ENCODE measurements at regions of chr12 and their contacts with region 1.

Region 1: GRCh38 chr12:80936498-80937390 is 990 bp downstream of the LIN7A start:
- DNase-seq: no peak
- H3K4me3 Mint-ChIP-seq: peak overlapping the region; percentile 51
- H3K27ac Mint-ChIP-seq: no peak overlapping the region
- H3K4me1 Mint-ChIP-seq: no peaks in the 10 kb centered on the region
- H3K27me3 Mint-ChIP-seq: peaks cover 35% of the 10 kb centered on the region

Region 2: GRCh38 chr12:80709811-80710726 is 226.7 kb before region 1 on chr12:
- intact Hi-C with region 1: loop called (anchors 5 kb)
- DNase-seq: no peak
- H3K4me3 Mint-ChIP-seq: no peak overlapping the region
- H3K27ac Mint-ChIP-seq: no peak overlapping the region
- H3K4me1 Mint-ChIP-seq: no peaks in the 10 kb centered on the region
- H3K27me3 Mint-ChIP-seq: peaks cover 64% of the 10 kb centered on the region

Region 3: DNA sequence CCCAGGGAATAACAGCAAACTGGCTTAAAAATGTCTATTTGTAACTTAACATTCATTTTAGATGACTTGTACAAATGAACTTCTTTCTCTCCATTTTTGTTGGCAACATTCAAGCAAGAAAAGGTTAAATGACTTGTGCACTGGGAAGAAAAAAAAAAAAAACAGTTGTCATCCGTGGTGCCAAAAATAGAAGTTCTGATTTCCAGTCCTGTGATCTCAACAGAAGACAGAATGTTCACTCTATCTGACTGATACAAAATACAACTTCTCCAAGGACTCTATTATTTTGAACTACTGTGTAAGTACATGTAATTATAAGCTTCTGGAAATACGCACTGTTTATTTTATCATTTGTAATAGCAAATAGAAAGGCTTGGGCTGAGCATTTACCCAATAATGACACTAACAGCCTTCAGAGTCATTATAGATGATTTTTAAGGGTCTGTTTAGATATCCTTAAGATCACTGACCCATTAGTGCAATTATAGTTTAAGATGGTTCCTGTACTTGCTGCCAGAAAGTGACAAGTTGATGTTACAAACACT is 59.0 kb before region 1 on chr12:
- intact Hi-C with region 1: no loop called
- DNase-seq: no peak
- H3K4me3 Mint-ChIP-seq: no peak overlapping the region
- H3K27ac Mint-ChIP-seq: no peak overlapping the region
- H3K4me1 Mint-ChIP-seq: no peaks in the 10 kb centered on the region
- H3K27me3 Mint-ChIP-seq: no peaks in the 10 kb centered on the region

Region 4: GRCh38 chr12:80912901-80913694 is 23.6 kb before region 1 on chr12:
- intact Hi-C with region 1: no loop called
- DNase-seq: no peak
- H3K4me3 Mint-ChIP-seq: no peak overlapping the region
- H3K27ac Mint-ChIP-seq: no peak overlapping the region
- H3K4me1 Mint-ChIP-seq: no peaks in the 10 kb centered on the region
- H3K27me3 Mint-ChIP-seq: no peaks in the 10 kb centered on the region

Measured in activated T-helper 2 cell treated with anti-CD3 and anti-CD28 coated beads, Interferon-gamma antibody, Interleukin-2, Interleukin-4, amounts not matched to agents 10 μg/mL and 5 μg/mL and 100 μg/mL, durations not matched to agents 14 hours and 24 hours and 36 hours (primary cell).